ENCODE measurements at regions of chr20 and their contacts with region 1.

Region 1: DNA sequence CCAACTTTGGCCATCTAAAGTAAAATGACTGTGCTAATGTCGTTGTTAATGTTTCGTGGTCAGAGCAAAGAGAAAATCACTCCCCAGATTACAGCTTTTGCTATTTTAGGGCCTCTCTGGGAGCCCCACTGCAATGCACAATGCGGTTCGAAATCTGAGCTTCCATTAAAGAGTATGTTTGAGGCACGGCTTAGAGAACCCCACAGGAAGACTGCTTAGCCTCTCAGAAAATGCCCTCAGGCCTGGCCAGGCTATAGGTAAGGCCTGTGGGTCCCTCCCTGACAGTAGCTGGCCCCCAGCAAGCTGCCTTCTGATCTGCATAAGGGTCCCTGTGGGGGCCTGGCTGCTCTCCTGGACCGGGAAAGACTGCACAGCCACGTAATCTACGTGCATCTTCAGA is 274.6 kb downstream of the PTPRT start:
- DNase-seq: no peak
- H3K4me3 Mint-ChIP-seq: no peak overlapping the region
- H3K27ac Mint-ChIP-seq: no peak overlapping the region
- H3K4me1 Mint-ChIP-seq: no peaks in the 10 kb centered on the region
- H3K27me3 Mint-ChIP-seq: no peaks in the 10 kb centered on the region

Region 2: GRCh38 chr20:42857446-42857845 is 57.6 kb before region 1 on chr20:
- CTCF ChIA-PET with region 1: no interaction called
- intact Hi-C with region 1: loop called (anchors 10 kb)
- DNase-seq: no peak
- H3K4me3 Mint-ChIP-seq: no peak overlapping the region
- H3K27ac Mint-ChIP-seq: no peak overlapping the region
- H3K4me1 Mint-ChIP-seq: no peaks in the 10 kb centered on the region
- H3K27me3 Mint-ChIP-seq: no peaks in the 10 kb centered on the region

Measured in activated naive CD4-positive, alpha-beta T cell treated with anti-CD3 and anti-CD28 coated beads for 36 hours (primary cell).